Naive thymus-derived CD4-positive, alpha-beta T cell (primary cell): ENCODE measurements at regions of chr6 and their contacts with region 1.

Region 1: DNA sequence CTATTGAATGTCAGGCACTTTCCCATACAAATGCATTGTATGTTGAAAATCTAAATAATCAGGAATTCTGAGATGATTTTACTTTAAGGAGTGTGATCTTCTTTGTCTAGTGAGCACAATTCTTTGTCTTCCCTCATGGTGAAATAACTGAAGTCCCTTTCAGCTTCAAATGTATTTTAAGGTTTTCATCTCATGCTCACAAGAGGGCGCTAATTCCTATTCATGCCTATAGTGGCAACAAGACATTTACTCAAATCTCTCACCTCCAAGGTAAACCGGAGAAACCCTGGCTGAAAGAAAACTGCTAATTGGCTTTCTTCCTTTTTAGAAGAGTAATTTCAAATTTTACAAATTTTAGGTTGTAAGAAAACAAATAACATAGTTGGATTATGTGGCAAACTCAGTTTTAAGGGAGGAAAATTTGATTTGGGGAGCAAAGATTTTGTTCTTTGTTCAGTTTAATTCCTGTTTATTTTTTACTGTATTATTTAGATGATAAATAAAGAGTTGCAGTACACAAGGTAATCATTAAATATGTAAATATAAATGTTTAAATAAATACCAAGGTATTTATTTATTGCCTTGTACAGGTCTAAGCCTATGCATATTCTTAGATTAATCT is 69.1 kb downstream of the SLC35F1 start:
- DNase-seq: peak in 6 of 9 donors; percentile 18 to 42 (median 24)
- ATAC-seq: no peak
- H3K4me3 ChIP-seq: no peak overlapping the region
- H3K4me3 Mint-ChIP-seq: no peak overlapping the region
- H3K27ac ChIP-seq: no peak overlapping the region
- H3K27ac Mint-ChIP-seq: no peak overlapping the region
- H3K4me1 ChIP-seq: no peaks in the 10 kb centered on the region
- H3K4me1 Mint-ChIP-seq: no peaks in the 10 kb centered on the region
- H3K27me3 ChIP-seq: no peaks in the 10 kb centered on the region
- H3K27me3 Mint-ChIP-seq: peaks cover 7 to 24% (median 16%) of the 10 kb centered on the region in 5 donors

Region 2: DNA sequence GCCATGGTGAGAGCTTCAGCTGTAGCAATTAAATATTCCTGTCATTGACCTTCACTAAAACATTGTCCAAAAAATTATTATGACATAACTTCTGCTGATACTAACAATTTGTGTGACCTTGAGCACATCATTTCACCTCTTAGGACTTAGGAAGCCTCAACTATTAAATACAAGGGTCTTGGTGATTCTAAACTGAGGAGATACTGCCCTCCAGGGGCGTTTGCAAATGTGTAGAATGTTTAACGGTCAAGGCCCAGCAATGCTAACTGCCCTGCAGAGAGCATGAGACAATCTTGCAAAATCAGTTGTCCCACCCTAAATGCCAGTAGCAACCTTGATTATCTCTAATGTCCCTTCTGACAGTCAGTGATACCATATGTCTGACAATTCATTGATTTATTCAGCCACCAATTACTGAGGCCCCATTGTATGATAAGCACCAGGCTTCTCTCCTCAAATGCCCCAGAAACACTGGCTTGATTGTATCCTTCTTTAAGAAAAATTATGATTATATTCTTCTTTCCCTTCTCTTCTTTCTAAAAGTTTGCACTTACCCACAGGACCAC is 287.9 kb after region 1 on chr6:
- CTCF ChIA-PET with region 1: no interaction called
- POLR2A ChIA-PET with region 1: no interaction called
- intact Hi-C with region 1: loop called in 1 of 2 experiments (anchors 10 kb)
- DNase-seq: no peak
- ATAC-seq: no peak
- H3K4me3 ChIP-seq: no peak overlapping the region
- H3K4me3 Mint-ChIP-seq: no peak overlapping the region
- H3K27ac ChIP-seq: no peak overlapping the region
- H3K27ac Mint-ChIP-seq: no peak overlapping the region
- H3K4me1 ChIP-seq: no peaks in the 10 kb centered on the region
- H3K4me1 Mint-ChIP-seq: no peaks in the 10 kb centered on the region
- H3K27me3 ChIP-seq: no peaks in the 10 kb centered on the region
- H3K27me3 Mint-ChIP-seq: peaks cover 0 to 4% (median 2%) of the 10 kb centered on the region in 5 donors

Region 3: GRCh38 chr6:118551063-118552053 is 575.2 kb after region 1 on chr6:
- CTCF ChIA-PET with region 1: interaction called, 3 read pairs
- POLR2A ChIA-PET with region 1: no interaction called
- intact Hi-C with region 1: loop called (anchors 1 to 2 kb)
- DNase-seq: peak in 7 of 9 donors; percentile 23 to 62 (median 47)
- ATAC-seq: peak; percentile 88
- H3K4me3 ChIP-seq: no peak overlapping the region
- H3K4me3 Mint-ChIP-seq: peak overlapping the region in 4 of 10 donors; percentile 19 to 63 (median 35)
- H3K27ac ChIP-seq: no peak overlapping the region
- H3K27ac Mint-ChIP-seq: peak overlapping the region in 8 of 9 donors; percentile 19 to 83 (median 42)
- H3K4me1 ChIP-seq: peaks cover 0 to 4% of the 10 kb centered on the region in 2 donors
- H3K4me1 Mint-ChIP-seq: peaks cover 16 to 79% (median 63%) of the 10 kb centered on the region in 7 donors
- H3K27me3 ChIP-seq: no peaks in the 10 kb centered on the region
- H3K27me3 Mint-ChIP-seq: no peaks in the 10 kb centered on the region

Region 4: GRCh38 chr6:118580585-118581419 is 604.7 kb after region 1 on chr6:
- CTCF ChIA-PET with region 1: no interaction called
- POLR2A ChIA-PET with region 1: no interaction called
- intact Hi-C with region 1: loop called in 1 of 2 experiments (anchors 1 kb)
- DNase-seq: peak in 5 of 9 donors; percentile 11 to 37 (median 16)
- ATAC-seq: peak; percentile 78
- H3K4me3 ChIP-seq: no peak overlapping the region
- H3K4me3 Mint-ChIP-seq: peak overlapping the region in 2 of 10 donors; percentile 7 to 64
- H3K27ac ChIP-seq: no peak overlapping the region
- H3K27ac Mint-ChIP-seq: peak overlapping the region in 7 of 9 donors; percentile 60 to 92 (median 85)
- H3K4me1 ChIP-seq: no peaks in the 10 kb centered on the region
- H3K4me1 Mint-ChIP-seq: peaks cover 0 to 31% (median 13%) of the 10 kb centered on the region in 7 donors
- H3K27me3 ChIP-seq: no peaks in the 10 kb centered on the region
- H3K27me3 Mint-ChIP-seq: no peaks in the 10 kb centered on the region

Region 5: DNA sequence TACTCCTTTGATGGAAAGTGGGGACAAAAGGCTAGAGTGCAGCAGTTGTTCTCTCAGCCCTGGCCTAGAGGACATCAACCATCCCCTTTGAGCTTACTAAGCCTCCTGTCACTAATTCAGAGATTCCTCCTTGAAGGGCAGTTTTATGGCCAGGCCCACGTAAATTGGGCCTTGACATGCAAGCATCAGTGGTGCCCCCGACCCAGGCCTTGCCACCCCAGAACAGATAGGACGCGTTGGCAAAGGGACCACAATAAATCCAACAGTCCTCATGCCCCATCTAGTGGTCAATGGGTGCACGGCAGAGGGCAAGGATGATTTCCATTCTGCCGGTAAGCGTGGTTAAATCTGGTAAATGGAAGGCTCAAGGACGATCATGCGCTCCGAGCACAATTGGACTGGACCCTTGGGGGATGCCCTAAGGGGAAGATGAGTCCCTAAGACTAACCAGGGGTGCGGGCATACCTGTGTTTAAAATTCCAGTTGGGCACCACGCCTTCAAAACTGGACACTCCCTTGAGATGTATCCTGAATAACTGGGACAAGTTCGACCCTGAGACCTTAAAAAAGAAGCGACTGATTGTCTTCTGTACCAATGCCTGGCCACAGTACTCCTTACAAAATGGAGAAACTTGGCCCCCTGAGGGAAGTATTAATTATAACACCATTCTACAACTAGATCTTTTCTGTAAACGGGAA is 642.7 kb after region 1 on chr6:
- CTCF ChIA-PET with region 1: no interaction called
- POLR2A ChIA-PET with region 1: no interaction called
- intact Hi-C with region 1: loop called (anchors 1 to 10 kb)
- DNase-seq: peak; percentile 36 to 70 (median 55)
- ATAC-seq: peak; percentile 92
- H3K4me3 ChIP-seq: no peak overlapping the region
- H3K4me3 Mint-ChIP-seq: peak overlapping the region in 3 of 10 donors; percentile 2 to 52 (median 46)
- H3K27ac ChIP-seq: no peak overlapping the region
- H3K27ac Mint-ChIP-seq: peak overlapping the region; percentile 26 to 96 (median 79)
- H3K4me1 ChIP-seq: peaks cover 0 to 8% of the 10 kb centered on the region in 2 donors
- H3K4me1 Mint-ChIP-seq: peaks cover 21 to 86% (median 77%) of the 10 kb centered on the region in 7 donors
- H3K27me3 ChIP-seq: no peaks in the 10 kb centered on the region
- H3K27me3 Mint-ChIP-seq: no peaks in the 10 kb centered on the region